Activated CD4-positive, alpha-beta T cell treated with anti-CD3 and anti-CD28 coated beads for 36 hours (primary cell): ENCODE measurements at regions of chr1 and their contacts with region 1.

Region 1: GRCh38 chr1:148318123-148318903 is 164.8 kb downstream of the PPIAL4G start:
- DNase-seq: peak; percentile 86
- ATAC-seq: peak; percentile 86
- H3K4me3 Mint-ChIP-seq: peak overlapping the region; percentile 78
- H3K27ac Mint-ChIP-seq: peak overlapping the region; percentile 92
- H3K4me1 Mint-ChIP-seq: peaks cover 33% of the 10 kb centered on the region
- H3K27me3 Mint-ChIP-seq: peaks cover 18% of the 10 kb centered on the region

Region 2: GRCh38 chr1:148347781-148348180 is 29.5 kb after region 1 on chr1:
- CTCF ChIA-PET with region 1: no interaction called
- POLR2A ChIA-PET with region 1: no interaction called
- intact Hi-C with region 1: no loop called
- DNase-seq: no peak
- ATAC-seq: no peak
- H3K4me3 Mint-ChIP-seq: no peak overlapping the region
- H3K27ac Mint-ChIP-seq: no peak overlapping the region
- H3K4me1 Mint-ChIP-seq: peaks cover 2% of the 10 kb centered on the region
- H3K27me3 Mint-ChIP-seq: peaks cover 14% of the 10 kb centered on the region

Region 3: GRCh38 chr1:148362626-148363438 is 44.5 kb after region 1 on chr1:
- CTCF ChIA-PET with region 1: no interaction called
- POLR2A ChIA-PET with region 1: no interaction called
- intact Hi-C with region 1: loop called in 1 of 2 experiments (anchors 5 kb)
- DNase-seq: peak; percentile 75
- ATAC-seq: peak; percentile 67
- H3K4me3 Mint-ChIP-seq: peak overlapping the region; percentile 74
- H3K27ac Mint-ChIP-seq: peak overlapping the region; percentile 80
- H3K4me1 Mint-ChIP-seq: peaks cover 44% of the 10 kb centered on the region
- H3K27me3 Mint-ChIP-seq: peaks cover 3% of the 10 kb centered on the region